GM12878 (cell line): ENCODE measurements at regions of chr2 and their contacts with region 1.

Region 1: DNA sequence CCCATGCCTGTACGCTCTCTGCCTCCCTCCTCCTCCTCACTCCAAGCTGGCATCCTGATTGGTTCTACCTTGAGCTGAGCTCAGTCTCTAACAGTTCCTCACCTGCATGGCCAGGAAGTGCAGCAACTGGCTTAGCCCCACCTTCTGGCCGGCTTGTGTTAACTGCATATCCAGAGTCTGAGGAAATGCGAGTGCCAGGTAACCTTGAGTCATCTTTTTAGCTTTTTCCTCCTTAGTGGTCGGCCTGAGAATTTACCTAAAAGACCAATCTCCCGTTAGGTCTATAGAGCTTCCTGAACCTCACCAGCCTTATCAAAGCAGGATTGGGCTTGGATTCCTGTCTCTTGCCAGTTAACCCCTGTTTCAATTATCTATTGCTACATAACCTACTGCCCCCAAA is 89.5 kb upstream of the STK39 start:
- DNase-seq: no peak
- ATAC-seq: peak; percentile 89
- H3K4me3 ChIP-seq: no peak overlapping the region
- H3K27ac ChIP-seq: no peak overlapping the region
- H3K4me1 ChIP-seq: no peaks in the 10 kb centered on the region
- H3K27me3 ChIP-seq: peaks cover 0 to 12% of the 10 kb centered on the region in 2 experiments; a peak in 1 of 4 replicates
- CTCF ChIP-seq: peak; percentile 33 to 54 (median 51)
- EP300 ChIP-seq: no peak
- POLR2A ChIP-seq: no peak
- RAD21 ChIP-seq: peak; percentile 43; the same call in 1 of the 2 replicates

Region 2: GRCh38 chr2:168160897-168161296 is 176.0 kb before region 1 on chr2:
- CTCF ChIA-PET with region 1: no interaction called
- POLR2A ChIA-PET with region 1: no interaction called
- RAD21 ChIA-PET with region 1: no interaction called
- SMC1A ChIA-PET with region 1: no interaction called
- in situ Hi-C with region 1: no loop called
- intact Hi-C with region 1: loop called (anchors 5 kb)
- DNase-seq: no peak
- ATAC-seq: peak; percentile 52; the same call in 2 of the 3 replicates
- H3K4me3 ChIP-seq: no peak overlapping the region
- H3K27ac ChIP-seq: no peak overlapping the region
- H3K4me1 ChIP-seq: no peaks in the 10 kb centered on the region
- H3K27me3 ChIP-seq: peaks cover 0 to under 1% of the 10 kb centered on the region in 2 experiments; a peak in 2 of 4 replicates
- CTCF ChIP-seq: peak; percentile 16 to 39 (median 30); a peak in 4 of 6 replicates
- EP300 ChIP-seq: no peak
- POLR2A ChIP-seq: no peak
- RAD21 ChIP-seq: peak; percentile 48